PC-3 (cell line): ENCODE measurements at regions of chr2 and their contacts with region 1.

Region 1: DNA sequence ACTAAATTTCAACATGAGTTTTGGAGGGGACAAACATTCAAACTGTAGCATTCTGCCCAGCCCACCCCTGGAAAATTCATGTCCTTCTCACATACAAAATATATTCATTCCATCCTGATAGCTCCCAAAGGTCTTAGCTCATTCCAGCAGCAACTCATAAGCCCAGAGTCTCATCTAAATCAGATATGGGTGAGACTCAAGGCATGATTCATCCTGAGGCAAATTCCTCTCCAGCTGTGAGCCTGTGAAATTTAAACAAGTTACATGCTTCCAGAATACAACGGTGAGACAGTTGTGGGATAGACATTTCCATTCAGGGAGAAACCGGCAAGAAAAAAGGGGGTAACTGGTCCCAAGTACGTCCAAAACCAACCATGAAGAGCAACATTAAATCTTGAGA is 43.5 kb upstream of the FAHD2A start:
- DNase-seq: peak; percentile 43
- ATAC-seq: no peak
- H3K4me3 ChIP-seq: no peak overlapping the region
- H3K27ac ChIP-seq: no peak overlapping the region
- H3K4me1 ChIP-seq: no peaks in the 10 kb centered on the region
- H3K27me3 ChIP-seq: no peaks in the 10 kb centered on the region
- CTCF ChIP-seq: no peak

Region 2: GRCh38 chr2:95074663-95075439 is 284.2 kb before region 1 on chr2:
- CTCF ChIA-PET with region 1: no interaction called
- POLR2A ChIA-PET with region 1: no interaction called
- intact Hi-C with region 1: no loop called
- DNase-seq: no peak
- ATAC-seq: no peak
- H3K4me3 ChIP-seq: no peak overlapping the region
- H3K27ac ChIP-seq: no peak overlapping the region
- H3K4me1 ChIP-seq: peaks cover 10% of the 10 kb centered on the region; the same call in 1 of the 2 replicates
- H3K27me3 ChIP-seq: no peaks in the 10 kb centered on the region
- CTCF ChIP-seq: no peak

Region 3: GRCh38 chr2:95287336-95287735 is 71.7 kb before region 1 on chr2:
- CTCF ChIA-PET with region 1: interaction called, 13 read pairs
- POLR2A ChIA-PET with region 1: interaction called, 6 read pairs
- intact Hi-C with region 1: no loop called
- DNase-seq: no peak
- ATAC-seq: no peak
- H3K4me3 ChIP-seq: no peak overlapping the region
- H3K27ac ChIP-seq: no peak overlapping the region
- H3K4me1 ChIP-seq: peaks cover 5% of the 10 kb centered on the region
- H3K27me3 ChIP-seq: no peaks in the 10 kb centered on the region
- CTCF ChIP-seq: no peak

Region 4: DNA sequence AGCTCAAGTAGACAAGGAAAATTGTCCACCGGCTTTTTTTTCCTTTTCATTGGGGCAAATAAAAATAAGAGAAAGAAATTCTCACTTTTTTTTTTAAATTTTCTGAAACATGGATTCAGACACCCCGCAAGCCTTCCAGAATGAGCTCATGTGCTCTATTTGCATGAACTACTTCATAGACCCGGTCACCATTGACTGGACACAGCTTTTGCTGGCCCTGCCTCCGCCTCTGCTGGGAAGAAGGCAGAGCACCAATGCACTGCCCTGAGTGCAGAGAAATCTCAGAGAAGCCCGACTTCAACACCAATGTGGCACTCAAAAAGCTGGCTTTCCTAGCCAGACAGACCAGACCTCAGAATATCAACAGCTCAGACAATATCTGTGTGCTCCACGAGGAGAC is 155.7 kb after region 1 on chr2:
- CTCF ChIA-PET with region 1: no interaction called
- POLR2A ChIA-PET with region 1: no interaction called
- intact Hi-C with region 1: no loop called
- DNase-seq: no peak
- ATAC-seq: no peak
- H3K4me3 ChIP-seq: no peak overlapping the region
- H3K27ac ChIP-seq: no peak overlapping the region
- H3K4me1 ChIP-seq: no peaks in the 10 kb centered on the region
- H3K27me3 ChIP-seq: no peaks in the 10 kb centered on the region
- CTCF ChIP-seq: no peak